Posterior vena cava (tissue), 2 donors: ENCODE measurements at regions of chr15 and their contacts with region 1.

Region 1: DNA sequence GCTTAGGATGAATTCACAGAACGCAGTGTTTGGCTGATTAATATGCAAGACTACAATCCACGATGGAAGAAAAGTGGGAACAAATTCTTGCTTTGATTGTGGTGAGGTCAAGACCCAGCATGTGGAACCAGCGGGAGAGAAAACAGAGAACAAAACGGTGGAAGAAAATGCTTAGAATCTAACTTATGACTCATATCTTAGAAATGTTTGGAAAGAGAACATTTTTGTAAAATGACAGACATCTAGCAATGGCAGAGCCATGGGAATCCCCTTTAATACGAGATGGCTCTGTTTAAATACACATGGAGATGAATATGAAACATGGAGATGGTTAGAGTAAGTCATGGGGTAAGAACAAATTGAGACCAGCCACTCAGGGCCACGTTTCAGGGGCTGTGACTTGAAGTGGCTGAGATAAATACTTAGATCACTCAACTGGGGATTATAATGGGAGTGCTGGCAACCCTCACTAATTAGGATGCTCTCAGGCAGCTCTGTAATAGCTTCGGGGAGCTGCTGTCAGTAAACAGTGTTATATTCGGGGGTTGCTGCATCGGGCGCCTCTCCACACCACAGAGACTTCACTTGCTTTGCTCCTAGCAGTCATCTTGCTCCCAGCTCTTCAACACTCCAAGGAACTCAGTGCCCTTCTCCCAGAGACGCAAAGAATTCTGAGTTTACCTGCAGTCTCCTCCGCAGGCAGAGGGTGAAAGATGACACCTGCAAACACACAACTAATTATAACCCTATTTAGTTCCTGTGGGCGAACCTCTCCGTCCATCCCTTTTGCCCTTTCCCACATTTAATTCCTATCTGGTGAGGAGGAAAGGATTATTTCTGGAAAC is 68.0 kb upstream of the ONECUT1 start:
- DNase-seq: no peak

Region 2: GRCh38 chr15:52440400-52440799 is 417.8 kb before region 1 on chr15:
- intact Hi-C with region 1: no loop called
- DNase-seq: no peak

Region 3: GRCh38 chr15:52772766-52773165 is 85.4 kb before region 1 on chr15:
- intact Hi-C with region 1: loop called in 1 of 2 experiments (anchors 5 kb)
- DNase-seq: no peak

Region 4: DNA sequence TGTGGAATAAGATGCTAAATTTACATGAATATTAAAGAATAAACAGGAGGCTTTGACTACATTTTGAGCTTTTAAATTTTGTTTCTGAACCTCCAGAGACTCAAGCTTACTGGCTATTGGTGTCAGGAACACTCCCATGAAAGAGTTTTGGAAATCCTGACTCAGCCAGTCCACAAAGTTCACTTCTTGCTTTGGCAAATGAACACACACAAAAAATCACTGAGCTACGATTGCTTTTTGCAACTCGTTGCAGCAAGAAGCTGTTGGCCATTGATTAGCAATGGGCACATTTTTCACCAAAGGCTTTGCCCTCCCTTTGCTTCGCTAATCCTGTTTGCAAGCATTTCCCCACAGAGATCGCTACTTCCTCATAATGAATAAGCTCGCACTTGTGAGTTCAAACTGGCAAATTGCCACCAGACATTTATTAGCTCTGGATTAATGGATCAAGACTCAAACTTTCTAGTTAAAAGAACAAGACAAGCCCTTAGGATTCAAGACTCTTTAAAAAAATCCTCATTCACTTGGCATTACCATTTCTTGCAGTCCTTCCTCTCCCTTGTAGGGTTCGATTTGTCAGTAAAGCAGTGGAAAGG is 275.2 kb after region 1 on chr15:
- intact Hi-C with region 1: no loop called
- DNase-seq: no peak